ENCODE measurements at regions of chr1 and their contacts with region 1.

Region 1: DNA sequence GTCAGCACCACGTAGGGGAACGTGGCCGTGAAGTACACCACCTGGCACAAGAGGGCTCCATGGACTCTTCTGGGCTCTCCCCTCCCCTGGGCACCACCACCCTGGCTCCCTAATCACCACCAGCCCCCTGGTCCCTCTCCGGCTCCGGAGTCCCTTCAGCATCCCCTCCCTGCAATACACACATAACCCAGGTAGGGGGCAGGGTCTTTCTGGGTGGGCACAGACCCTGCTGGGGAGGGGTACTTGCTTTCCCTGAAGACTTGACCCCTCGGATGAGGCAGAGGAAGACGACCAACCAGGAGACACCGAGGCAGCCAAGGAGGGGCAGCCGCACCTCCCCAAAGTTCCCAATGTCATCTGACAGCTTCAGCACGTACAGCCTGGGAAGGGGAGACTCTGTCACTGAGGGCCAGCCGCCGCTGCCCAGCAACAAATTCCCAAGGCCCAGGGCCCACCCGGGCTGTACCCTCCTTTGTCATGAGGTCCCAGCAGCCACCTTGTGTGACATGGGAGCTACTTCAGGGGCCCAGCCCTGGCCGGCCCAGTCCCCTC is 11.3 kb downstream of the CCDC24 start:
- DNase-seq: no peak
- H3K4me3 ChIP-seq: no peak overlapping the region
- H3K27me3 ChIP-seq: no peaks in the 10 kb centered on the region
- CTCF ChIP-seq: peak; percentile 20; the same call in 1 of the 2 replicates

Region 2: GRCh38 chr1:43991476-43992231 is 11.0 kb before region 1 on chr1 and contains the start of gene CCDC24:
- CTCF ChIA-PET with region 1: interaction called, 44 read pairs
- POLR2A ChIA-PET with region 1: no interaction called
- DNase-seq: peak; percentile 40
- H3K4me3 ChIP-seq: peak within 1 kb of the TSS; percentile 68
- H3K27me3 ChIP-seq: no peaks in the 10 kb centered on the region
- CTCF ChIP-seq: no peak
- polyA plus RNA-seq, gene CCDC24: 0.98 and 2.0 TPM in 2 replicates

Region 3: GRCh38 chr1:44021581-44022321 is 19.1 kb after region 1 on chr1:
- CTCF ChIA-PET with region 1: interaction called, 41 read pairs
- POLR2A ChIA-PET with region 1: no interaction called
- DNase-seq: no peak
- H3K4me3 ChIP-seq: no peak overlapping the region
- H3K27me3 ChIP-seq: no peaks in the 10 kb centered on the region
- CTCF ChIP-seq: no peak

Region 4: DNA sequence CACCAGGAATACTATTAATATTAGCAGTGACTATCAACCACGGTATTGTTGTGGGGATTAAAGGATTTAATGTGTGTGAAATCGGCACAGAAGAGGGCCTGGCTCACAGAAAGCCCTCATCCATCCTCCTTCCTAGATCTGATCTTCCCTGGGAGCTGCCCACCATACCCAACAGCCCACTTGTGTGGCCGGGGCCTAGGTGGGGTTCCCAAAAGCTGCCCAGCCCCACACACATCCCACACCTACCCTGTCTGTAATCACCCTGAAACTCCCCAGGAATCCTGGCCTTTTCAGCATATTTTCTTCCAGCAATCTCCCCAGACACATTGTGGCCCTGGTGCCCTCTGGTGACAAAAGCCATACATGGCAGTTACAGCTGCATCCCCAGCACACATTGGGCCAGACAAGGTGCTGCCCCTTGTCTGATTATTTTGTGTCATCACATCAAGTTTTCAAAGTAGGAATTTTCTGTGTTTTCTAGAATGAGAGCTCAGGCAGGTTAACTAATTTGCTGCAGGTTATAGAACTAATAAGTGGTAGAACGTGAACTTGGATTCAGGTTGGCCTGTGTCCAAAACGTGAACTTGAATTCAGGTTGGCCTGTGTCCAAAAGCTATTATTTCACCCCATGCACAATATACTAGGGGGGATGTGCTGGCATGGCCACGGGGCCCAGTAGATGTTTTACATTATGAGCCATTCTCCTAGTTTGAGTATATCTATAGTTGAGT is 33.9 kb after region 1 on chr1:
- CTCF ChIA-PET with region 1: interaction called, 197 read pairs
- POLR2A ChIA-PET with region 1: no interaction called
- DNase-seq: no peak
- H3K4me3 ChIP-seq: no peak overlapping the region
- H3K27me3 ChIP-seq: no peaks in the 10 kb centered on the region
- CTCF ChIP-seq: peak; percentile 80

Region 5: DNA sequence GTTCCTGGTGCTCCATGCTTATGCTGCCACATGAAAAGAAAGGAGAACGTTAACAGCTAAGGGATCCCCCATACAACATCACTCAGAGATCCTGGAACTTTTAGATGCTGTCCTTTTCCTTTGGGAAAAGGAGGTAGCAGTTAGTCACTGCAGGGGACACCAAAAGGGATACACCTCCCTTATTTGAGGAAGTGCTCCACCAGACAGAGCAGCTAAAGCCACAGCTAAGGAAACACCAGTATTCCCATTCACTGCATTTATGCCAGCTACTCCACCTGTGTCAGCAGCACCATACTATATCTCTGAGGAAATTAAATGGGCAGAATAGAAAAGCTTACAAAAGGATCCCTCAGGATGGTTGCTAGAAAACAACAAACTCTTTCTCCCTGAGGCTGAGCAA is 54.6 kb after region 1 on chr1:
- CTCF ChIA-PET with region 1: interaction called, 10 read pairs
- POLR2A ChIA-PET with region 1: no interaction called
- DNase-seq: no peak
- H3K4me3 ChIP-seq: no peak overlapping the region
- H3K27me3 ChIP-seq: no peaks in the 10 kb centered on the region
- CTCF ChIP-seq: no peak